Breast epithelium (tissue), 4 donors: ENCODE measurements at regions of chr19 and their contacts with region 1.

Region 1: GRCh38 chr19:58178206-58178605 is 4.7 kb upstream of the ZNF274 start:
- DNase-seq: no peak
- H3K4me3 ChIP-seq: no peak overlapping the region
- H3K27ac ChIP-seq: no peak overlapping the region
- H3K4me1 ChIP-seq: no peaks in the 10 kb centered on the region
- H3K27me3 ChIP-seq: no peaks in the 10 kb centered on the region
- CTCF ChIP-seq: no peak
- POLR2A ChIP-seq: no peak

Region 2: GRCh38 chr19:56681702-56682101 is 1496.5 kb before region 1 on chr19:
- intact Hi-C with region 1: loop called (anchors 5 kb)
- DNase-seq: no peak
- H3K4me3 ChIP-seq: no peak overlapping the region
- H3K27ac ChIP-seq: no peak overlapping the region
- H3K4me1 ChIP-seq: no peaks in the 10 kb centered on the region
- H3K27me3 ChIP-seq: no peaks in the 10 kb centered on the region
- CTCF ChIP-seq: no peak
- POLR2A ChIP-seq: no peak

Region 3: DNA sequence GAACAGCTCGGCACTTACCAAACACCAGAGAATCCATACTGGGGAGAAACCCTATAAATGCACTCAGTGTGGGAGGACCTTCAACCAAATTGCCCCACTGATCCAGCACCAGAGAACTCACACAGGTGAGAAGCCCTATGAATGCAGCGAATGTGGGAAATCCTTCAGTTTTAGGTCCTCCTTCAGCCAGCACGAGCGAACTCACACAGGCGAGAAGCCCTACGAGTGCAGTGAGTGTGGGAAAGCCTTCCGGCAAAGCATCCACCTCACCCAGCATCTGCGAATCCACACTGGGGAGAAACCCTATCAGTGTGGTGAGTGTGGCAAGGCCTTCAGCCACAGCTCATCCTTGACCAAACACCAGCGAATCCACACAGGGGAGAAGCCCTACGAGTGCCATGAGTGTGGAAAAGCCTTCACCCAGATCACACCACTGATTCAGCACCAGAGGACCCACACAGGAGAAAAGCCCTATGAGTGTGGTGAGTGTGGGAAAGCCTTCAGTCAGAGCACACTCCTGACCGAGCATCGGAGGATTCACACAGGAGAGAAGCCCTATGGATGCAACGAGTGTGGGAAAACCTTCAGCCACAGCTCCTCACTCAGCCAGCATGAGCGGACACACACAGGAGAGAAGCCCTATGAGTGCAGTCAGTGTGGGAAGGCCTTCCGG is 110.8 kb before region 1 on chr19:
- intact Hi-C with region 1: no loop called
- DNase-seq: no peak
- H3K4me3 ChIP-seq: peak overlapping the region in 1 of 3 donors; percentile 25
- H3K27ac ChIP-seq: no peak overlapping the region
- H3K4me1 ChIP-seq: no peaks in the 10 kb centered on the region
- H3K27me3 ChIP-seq: no peaks in the 10 kb centered on the region
- CTCF ChIP-seq: no peak
- POLR2A ChIP-seq: no peak